GM23248 (cell line): ENCODE measurements at regions of chr10 and their contacts with region 1.

Region 1: DNA sequence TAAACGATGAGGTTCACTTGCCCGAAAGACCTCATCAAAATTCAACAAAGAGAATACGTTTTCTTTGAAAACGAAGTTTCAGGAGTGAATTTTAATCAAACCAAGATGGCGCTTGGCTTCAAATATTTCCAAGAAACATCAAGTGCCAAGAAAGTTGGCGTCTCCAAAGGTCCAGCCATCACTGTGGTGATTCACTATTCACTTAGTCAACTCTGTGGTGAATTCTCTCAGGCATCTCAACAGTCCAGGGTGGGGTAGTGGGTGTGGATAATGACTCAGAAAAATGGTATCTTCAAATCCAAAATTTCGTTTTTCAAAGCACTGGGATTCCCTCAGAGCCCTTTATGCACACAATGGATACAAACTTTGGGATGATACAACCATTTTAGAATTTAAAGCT is 133.1 kb downstream of the SVIL start:
- DNase-seq: peak; percentile 96
- H3K4me3 ChIP-seq: peak overlapping the region; percentile 12; the same call in 1 of the 2 replicates
- H3K27ac ChIP-seq: peak overlapping the region; percentile 75
- H3K4me1 ChIP-seq: peaks cover 11% of the 10 kb centered on the region
- H3K27me3 ChIP-seq: no peaks in the 10 kb centered on the region

Region 2: GRCh38 chr10:29386342-29386999 is 115.2 kb before region 1 on chr10:
- in situ Hi-C with region 1: loop called (anchors 10 kb)
- DNase-seq: peak; percentile 58
- H3K4me3 ChIP-seq: no peak overlapping the region
- H3K27ac ChIP-seq: no peak overlapping the region
- H3K4me1 ChIP-seq: no peaks in the 10 kb centered on the region
- H3K27me3 ChIP-seq: peaks cover 22% of the 10 kb centered on the region